ENCODE measurements at regions of chr5 and their contacts with region 1.

Region 1: GRCh38 chr5:142012792-142013388 is at the start of gene GNPDA1:
- DNase-seq: peak; percentile 74
- ATAC-seq: peak; percentile 9
- H3K4me3 Mint-ChIP-seq: peak within 1 kb of the TSS; percentile 89
- H3K27ac Mint-ChIP-seq: peak within 1 kb of the TSS; percentile 99
- H3K4me1 Mint-ChIP-seq: peaks cover 80% of the 10 kb centered on the region
- H3K27me3 Mint-ChIP-seq: no peaks in the 10 kb centered on the region
- CTCF ChIP-seq: no peak
- total RNA-seq, gene GNPDA1: 82.4 to 88.3 TPM

Region 2: GRCh38 chr5:141992349-141992963 is 20.4 kb before region 1 on chr5:
- CTCF ChIA-PET with region 1: interaction called, 37 read pairs
- POLR2A ChIA-PET with region 1: interaction called, 3 read pairs
- intact Hi-C with region 1: no loop called
- DNase-seq: peak; percentile 93
- ATAC-seq: peak; percentile 90
- H3K4me3 Mint-ChIP-seq: no peak overlapping the region
- H3K27ac Mint-ChIP-seq: no peak overlapping the region
- H3K4me1 Mint-ChIP-seq: peaks cover 15% of the 10 kb centered on the region
- H3K27me3 Mint-ChIP-seq: no peaks in the 10 kb centered on the region
- CTCF ChIP-seq: peak; percentile 89

Region 3: DNA sequence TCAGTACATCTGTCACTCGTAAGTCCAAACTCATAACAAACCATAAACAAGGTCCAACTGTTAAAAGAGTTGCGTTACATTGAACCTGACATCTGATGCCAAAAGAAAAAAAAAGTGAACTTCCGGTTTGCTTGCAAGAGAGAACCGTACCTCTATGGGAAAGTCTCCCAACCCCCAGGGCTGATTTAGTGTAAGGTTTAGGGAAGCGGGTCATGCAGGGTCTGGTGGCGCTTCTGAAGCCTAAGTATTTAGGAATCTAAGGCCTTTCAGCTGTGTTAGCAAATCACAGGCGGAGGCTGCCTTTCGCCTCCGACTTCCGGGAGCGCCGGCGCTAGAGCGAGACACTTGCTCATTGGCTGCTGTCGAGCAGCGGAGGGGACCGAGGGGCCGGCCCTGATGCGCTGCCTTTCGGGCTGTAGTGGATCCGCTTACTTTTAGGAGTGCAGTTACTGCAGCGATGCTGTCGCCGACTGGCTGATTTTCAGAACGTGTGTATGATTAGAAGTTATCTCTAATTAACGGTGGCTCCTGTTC is 11.9 kb after region 1 on chr5:
- CTCF ChIA-PET with region 1: interaction called, 24 read pairs
- POLR2A ChIA-PET with region 1: interaction called, 9 read pairs
- intact Hi-C with region 1: no loop called
- DNase-seq: peak; percentile 92
- ATAC-seq: peak; percentile 100
- H3K4me3 Mint-ChIP-seq: peak overlapping the region; percentile 96
- H3K27ac Mint-ChIP-seq: peak overlapping the region; percentile 96
- H3K4me1 Mint-ChIP-seq: peaks cover 19% of the 10 kb centered on the region
- H3K27me3 Mint-ChIP-seq: no peaks in the 10 kb centered on the region
- CTCF ChIP-seq: no peak

Region 4: GRCh38 chr5:142095651-142096330 is 82.9 kb after region 1 on chr5:
- CTCF ChIA-PET with region 1: interaction called, 47 read pairs
- POLR2A ChIA-PET with region 1: interaction called, 33 read pairs
- intact Hi-C with region 1: loop called (anchors 1 kb)
- DNase-seq: peak; percentile 97
- ATAC-seq: peak; percentile 88
- H3K4me3 Mint-ChIP-seq: peak overlapping the region; percentile 51
- H3K27ac Mint-ChIP-seq: peak overlapping the region; percentile 93
- H3K4me1 Mint-ChIP-seq: peaks cover 78% of the 10 kb centered on the region
- H3K27me3 Mint-ChIP-seq: no peaks in the 10 kb centered on the region
- CTCF ChIP-seq: no peak

Region 5: DNA sequence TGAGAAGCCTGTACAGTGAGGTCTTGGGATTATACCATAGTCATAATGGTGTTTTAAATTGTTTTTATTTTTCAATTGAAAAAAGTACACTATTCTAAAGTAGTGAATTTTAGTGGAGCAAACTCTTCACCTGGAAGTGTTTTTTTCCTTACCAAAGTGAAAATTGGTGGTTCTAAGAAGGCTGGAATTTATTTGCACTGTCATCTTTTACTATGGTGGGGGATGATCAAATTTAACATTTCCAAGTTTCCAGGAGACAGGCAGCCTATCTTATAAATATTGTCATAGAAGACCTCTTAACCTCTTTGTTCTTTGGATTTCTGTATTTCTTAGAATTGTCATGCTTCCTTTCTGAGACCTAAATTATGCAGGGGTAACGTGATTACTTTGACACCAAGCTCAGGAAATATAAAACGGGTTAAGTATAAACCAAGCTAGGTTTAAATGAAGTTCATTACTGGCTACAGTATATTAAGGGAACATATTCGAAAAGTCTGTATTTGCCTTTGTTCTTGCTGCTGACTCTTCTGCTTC is 115.9 kb after region 1 on chr5:
- CTCF ChIA-PET with region 1: interaction called, 13 read pairs
- POLR2A ChIA-PET with region 1: interaction called, 7 read pairs
- intact Hi-C with region 1: no loop called
- DNase-seq: no peak
- ATAC-seq: peak; percentile 72
- H3K4me3 Mint-ChIP-seq: peak overlapping the region; percentile 6
- H3K27ac Mint-ChIP-seq: peak overlapping the region; percentile 60
- H3K4me1 Mint-ChIP-seq: peaks cover 57% of the 10 kb centered on the region
- H3K27me3 Mint-ChIP-seq: no peaks in the 10 kb centered on the region
- CTCF ChIP-seq: no peak

Measured in activated CD8-positive, alpha-beta T cell treated with anti-CD3 and anti-CD28 coated beads for 36 hours (primary cell).